ENCODE measurements at regions of chr11 and their contacts with region 1.

Region 1: GRCh38 chr11:64419818-64420485 is 61.0 kb downstream of the RPS6KA4 start:
- DNase-seq: no peak

Region 2: GRCh38 chr11:64378335-64378880 is 41.5 kb before region 1 on chr11:
- intact Hi-C with region 1: no loop called
- DNase-seq: no peak

Region 3: GRCh38 chr11:64489831-64490441 is 70.0 kb after region 1 on chr11:
- intact Hi-C with region 1: loop called in 1 of 2 experiments (anchors 2 kb)
- DNase-seq: peak; percentile 88

Measured in posterior vena cava (tissue), 2 donors.